Vagina (tissue), 2 donors: ENCODE measurements at regions of chr16 and their contacts with region 1.

Region 1: DNA sequence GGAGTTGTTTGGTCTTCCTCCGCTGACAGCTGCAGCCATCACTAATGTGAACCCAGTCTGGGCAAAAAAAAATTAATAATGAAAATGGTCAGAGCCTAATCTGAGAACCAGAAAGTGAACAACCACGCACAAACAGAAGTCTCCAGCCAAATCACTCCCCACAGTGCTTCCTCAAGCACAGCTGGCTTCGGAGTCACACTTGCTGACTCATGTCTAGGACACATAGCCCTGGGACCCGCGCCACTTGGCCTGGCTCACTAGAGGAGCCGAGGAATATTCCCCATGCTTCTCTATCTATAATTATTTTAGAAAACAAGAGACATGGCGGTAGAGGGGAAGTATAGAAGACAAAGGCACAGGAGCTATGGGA is 109.1 kb downstream of the ZFHX3 start:
- DNase-seq: peak in 1 of 2 donors; percentile 95
- H3K4me3 ChIP-seq: no peak overlapping the region
- H3K27ac ChIP-seq: peak overlapping the region; percentile 81
- H3K4me1 ChIP-seq: peaks cover 59% of the 10 kb centered on the region
- H3K27me3 ChIP-seq: no peaks in the 10 kb centered on the region
- CTCF ChIP-seq: no peak
- POLR2A ChIP-seq: no peak

Region 2: GRCh38 chr16:72856797-72857196 is 82.0 kb before region 1 on chr16:
- intact Hi-C with region 1: loop called (anchors 10 kb)
- DNase-seq: no peak
- H3K4me3 ChIP-seq: no peak overlapping the region
- H3K27ac ChIP-seq: no peak overlapping the region
- H3K4me1 ChIP-seq: no peaks in the 10 kb centered on the region
- H3K27me3 ChIP-seq: no peaks in the 10 kb centered on the region
- CTCF ChIP-seq: no peak
- POLR2A ChIP-seq: no peak

Region 3: DNA sequence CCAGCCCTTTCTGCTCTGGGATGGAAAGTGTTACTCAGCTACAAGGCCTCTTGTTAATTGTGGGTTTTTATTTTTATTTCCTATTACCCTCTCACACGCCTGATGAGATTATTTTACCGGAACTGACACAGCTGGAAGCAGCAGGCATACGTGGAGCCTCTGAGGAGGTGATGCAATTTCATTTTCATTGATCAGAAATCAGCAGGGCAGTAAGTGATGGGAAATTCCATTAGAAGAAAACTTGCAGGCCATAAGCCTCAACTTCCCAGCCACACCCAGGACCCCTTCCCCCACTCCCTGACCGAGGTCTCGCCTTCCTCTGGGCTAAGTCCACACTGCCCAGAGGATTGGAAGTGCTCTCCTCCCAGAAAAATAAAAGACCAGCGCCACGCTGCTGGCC is 39.4 kb after region 1 on chr16:
- intact Hi-C with region 1: no loop called
- DNase-seq: no peak
- H3K4me3 ChIP-seq: no peak overlapping the region
- H3K27ac ChIP-seq: no peak overlapping the region
- H3K4me1 ChIP-seq: peaks cover 7% of the 10 kb centered on the region
- H3K27me3 ChIP-seq: no peaks in the 10 kb centered on the region
- CTCF ChIP-seq: no peak
- POLR2A ChIP-seq: no peak

Region 4: DNA sequence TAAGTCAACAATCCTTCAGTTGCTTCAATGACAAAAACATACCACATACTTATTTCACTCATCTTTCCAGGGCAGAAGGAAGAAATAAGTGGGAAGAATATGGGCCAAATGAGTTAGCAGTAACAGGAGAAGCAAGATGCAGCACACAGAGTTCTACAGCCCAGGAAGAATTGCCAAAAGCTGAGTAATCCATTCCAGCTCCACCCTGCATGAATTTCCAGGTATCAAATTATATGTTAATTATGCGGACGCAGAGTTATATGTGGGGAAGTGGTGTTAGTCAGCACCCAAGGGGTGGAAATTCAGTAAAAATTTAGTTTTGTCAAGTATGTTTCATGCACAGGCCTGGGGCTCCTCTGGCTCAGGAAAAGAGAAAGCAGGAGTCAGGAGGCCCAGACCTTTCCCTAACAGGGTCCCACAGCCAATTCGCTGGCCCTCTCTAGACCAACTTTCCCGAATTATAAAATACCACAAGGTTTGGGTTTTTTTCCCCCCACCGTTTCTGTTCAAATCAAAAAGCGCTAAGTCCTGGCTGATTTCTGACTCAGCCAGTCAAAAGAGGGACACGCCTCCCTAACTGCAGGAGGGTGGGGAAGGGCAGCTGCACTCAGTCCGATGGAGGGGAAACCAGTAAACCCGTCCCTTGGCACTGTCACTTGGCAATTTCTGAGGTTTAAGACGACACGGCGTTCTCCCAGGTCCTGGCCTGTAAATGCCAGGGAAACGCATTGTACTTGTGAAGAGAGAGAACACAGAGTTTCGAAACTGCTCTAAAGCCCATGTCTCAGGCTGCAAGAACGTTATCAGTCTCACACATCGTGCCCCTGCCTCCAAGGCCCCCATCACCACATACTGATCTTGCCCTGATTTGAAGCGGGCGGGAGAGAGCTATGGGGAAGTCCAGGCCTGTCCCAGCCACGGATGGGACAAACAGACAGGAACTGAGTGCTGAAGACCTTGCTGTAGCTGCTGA is 51.1 kb after region 1 on chr16:
- intact Hi-C with region 1: loop called (anchors 5 kb)
- DNase-seq: peak in 1 of 2 donors; percentile 98
- H3K4me3 ChIP-seq: peak overlapping the region; percentile 16 to 23
- H3K27ac ChIP-seq: peak overlapping the region; percentile 78
- H3K4me1 ChIP-seq: peaks cover 73% of the 10 kb centered on the region
- H3K27me3 ChIP-seq: no peaks in the 10 kb centered on the region
- CTCF ChIP-seq: no peak
- POLR2A ChIP-seq: no peak

Region 5: GRCh38 chr16:73054814-73055513 is 116.2 kb after region 1 on chr16:
- intact Hi-C with region 1: loop called (anchors 5 kb)
- DNase-seq: no peak
- H3K4me3 ChIP-seq: peak overlapping the region in 1 of 2 donors; percentile 17
- H3K27ac ChIP-seq: peak overlapping the region; percentile 93
- H3K4me1 ChIP-seq: peaks cover 41% of the 10 kb centered on the region
- H3K27me3 ChIP-seq: no peaks in the 10 kb centered on the region
- CTCF ChIP-seq: no peak
- POLR2A ChIP-seq: no peak